ENCODE measurements at regions of chr16 and their contacts with region 1.

Region 1: DNA sequence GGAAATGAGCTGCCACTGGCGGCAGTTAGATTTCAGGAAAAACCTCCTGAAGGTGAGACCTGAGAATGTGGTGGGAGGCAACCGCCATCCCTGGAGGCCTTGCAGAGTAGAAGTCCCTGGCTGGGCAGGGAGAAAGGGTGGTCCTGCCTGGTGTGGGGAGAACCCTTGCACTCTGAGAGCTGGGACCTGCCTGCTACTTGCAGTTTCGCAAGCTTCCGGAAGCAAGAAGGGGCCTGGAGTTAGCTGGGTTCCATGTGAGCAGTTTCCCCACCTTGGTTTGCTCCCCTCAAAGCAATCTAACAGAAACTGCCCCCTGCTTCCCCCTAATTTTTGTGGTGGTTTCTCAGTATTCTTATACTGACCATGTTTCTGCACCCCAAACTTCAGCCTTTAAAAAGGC is 6.5 kb downstream of the ZNF629 start:
- DNase-seq: no peak

Region 2: DNA sequence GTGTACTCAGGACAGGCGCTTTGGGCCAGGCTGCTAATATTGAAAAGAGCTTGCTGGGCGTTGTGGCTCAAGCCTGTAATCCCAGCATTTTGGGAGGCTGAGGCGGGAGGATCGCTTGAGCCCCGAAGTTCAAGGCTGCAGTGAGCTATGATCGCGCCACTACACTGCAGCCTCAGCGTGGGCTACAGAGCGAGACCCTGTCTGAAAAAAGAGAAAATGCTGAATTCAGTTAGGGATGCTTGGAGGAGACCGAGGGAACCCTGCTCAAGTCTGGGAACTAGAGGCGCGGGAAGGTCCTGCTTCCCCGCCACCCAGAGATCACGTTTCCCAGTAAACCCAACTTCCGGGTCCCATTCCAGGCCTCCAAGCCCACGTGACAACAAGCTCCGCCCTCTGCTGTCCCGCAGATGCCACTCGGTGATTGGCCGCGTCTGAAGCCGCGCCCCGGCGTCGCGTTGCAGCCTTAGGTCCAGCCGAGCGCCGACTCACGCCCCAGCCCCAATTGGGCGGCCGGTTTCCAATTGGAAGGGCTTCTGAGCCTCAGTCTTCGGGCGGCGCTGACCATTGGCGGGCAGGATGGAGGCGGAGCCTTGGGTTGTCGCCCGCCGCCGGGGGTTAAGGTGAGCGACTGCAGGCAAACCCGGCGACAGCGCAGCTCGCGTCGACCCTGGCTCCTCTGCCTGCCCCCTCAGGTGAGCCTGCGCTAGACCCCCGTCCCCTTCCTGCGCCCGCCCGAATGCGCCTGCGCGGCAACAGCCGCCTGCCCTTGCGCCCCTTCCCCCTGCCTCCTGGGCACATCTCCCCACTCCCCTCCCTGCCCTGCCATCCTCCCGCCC is 32.5 kb before region 1 on chr16 and contains the start of gene PHKG2:
- in situ Hi-C with region 1: no loop called
- DNase-seq: peak; percentile 100
- total RNA-seq, gene PHKG2: 35.9 TPM in 2 replicates

Region 3: GRCh38 chr16:30884760-30885159 is 104.2 kb after region 1 on chr16:
- in situ Hi-C with region 1: loop called (anchors 5 kb)
- DNase-seq: no peak